ENCODE measurements at regions of chr10 and their contacts with region 1.

Region 1: DNA sequence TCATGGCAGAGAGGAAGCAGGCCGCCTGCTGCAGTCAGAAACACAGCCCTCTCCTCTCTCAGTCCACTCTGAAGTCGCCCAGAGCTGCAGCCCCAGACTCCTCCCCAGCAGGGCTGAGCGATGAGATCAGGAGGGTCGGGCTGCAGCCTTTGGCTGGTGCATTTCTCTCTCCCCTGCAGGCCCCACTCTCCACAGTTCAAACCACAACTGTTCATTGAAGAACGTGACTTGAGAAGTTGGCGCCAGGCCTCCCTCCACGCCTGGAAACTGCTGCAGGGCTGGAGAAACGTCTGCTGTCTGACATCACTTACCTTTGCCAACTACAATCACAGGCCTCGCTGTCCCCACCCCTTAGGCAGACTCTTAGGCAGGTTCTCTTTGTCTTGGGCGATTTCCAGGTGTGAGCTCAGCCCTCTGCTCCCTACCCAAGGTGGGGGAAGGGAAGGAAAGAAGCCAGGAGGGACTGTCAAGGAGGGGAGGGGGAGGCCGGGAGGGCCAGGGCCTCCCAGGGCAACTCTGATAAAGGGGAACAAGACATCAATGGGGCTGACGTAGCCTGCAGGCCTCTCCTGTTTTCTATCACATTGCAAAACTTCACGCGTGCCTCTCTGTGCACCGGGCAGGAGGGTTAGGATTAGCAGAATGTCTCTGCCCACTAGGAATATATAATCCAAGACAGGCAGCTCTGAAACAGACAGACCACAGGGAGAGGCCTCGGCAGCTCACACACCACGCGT is 32.8 kb downstream of the CALML5 start:
- DNase-seq: no peak
- H3K4me3 ChIP-seq: no peak overlapping the region
- H3K27ac ChIP-seq: no peak overlapping the region; a peak in 1 of 4 replicates
- H3K4me1 ChIP-seq: peaks cover 0 to 8% of the 10 kb centered on the region in 2 experiments; a peak in 1 of 4 replicates
- H3K27me3 ChIP-seq: no peaks in the 10 kb centered on the region
- CTCF ChIP-seq: no peak
- EP300 ChIP-seq: no peak
- RAD21 ChIP-seq: no peak

Region 2: GRCh38 chr10:5446390-5446926 is 20.1 kb before region 1 on chr10:
- CTCF ChIA-PET with region 1: interaction called, 14 read pairs
- POLR2A ChIA-PET with region 1: no interaction called
- DNase-seq: no peak
- H3K4me3 ChIP-seq: no peak overlapping the region
- H3K27ac ChIP-seq: 0 out of 4 replicates have a peak overlapping the region, but pooled peaks of 1 of the 2 experiments have one; percentile 22
- H3K4me1 ChIP-seq: peaks cover 2 to 23% of the 10 kb centered on the region in 2 experiments; a peak in 3 of 4 replicates
- H3K27me3 ChIP-seq: no peaks in the 10 kb centered on the region
- CTCF ChIP-seq: no peak
- EP300 ChIP-seq: no peak
- RAD21 ChIP-seq: no peak

Region 3: DNA sequence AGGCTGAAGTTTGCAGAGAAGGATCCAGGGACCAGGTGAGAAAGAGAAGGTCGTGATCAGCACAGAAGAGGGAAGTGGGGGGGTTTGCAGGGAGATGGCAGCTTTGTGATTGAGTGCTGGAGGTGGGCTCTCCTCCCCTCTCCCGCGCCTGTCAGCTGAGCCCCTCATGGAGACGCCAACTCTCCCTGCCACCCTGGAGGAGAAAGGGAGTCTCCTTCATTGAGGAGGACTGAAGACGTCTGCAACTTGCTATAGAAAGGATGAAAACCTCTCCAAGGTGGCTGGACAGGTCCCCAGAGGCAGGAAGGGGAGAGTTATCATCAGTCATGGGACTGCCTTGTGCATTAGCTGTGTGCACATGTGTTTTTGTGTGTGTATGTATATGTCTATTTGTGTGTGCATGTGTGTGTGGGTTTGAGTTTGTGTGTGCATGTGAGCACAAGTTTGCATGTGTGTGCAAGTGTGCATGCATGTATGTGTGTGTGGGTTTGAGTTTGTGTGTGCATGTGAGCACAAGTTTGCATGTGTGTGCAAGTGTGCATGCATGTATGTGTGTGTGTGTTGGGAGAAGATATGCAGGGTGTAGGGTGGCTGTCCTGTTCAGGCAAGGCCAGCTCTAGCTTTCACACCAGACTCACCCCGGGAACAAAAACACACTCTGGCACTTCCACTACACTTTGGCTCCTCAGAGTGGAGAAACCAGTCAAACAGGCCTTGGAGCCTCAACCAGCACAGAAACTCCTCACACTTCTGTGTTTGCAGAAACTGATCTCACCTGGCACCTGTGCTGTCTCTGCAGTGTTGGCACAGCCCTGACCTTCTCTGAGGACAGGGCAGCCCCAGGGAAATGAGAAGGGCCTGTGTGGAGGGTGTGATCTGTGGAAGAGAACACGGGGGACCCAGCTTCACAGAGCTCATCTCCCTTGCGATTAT is 36.6 kb after region 1 on chr10:
- CTCF ChIA-PET with region 1: no interaction called
- POLR2A ChIA-PET with region 1: no interaction called
- DNase-seq: no peak
- H3K4me3 ChIP-seq: no peak overlapping the region
- H3K27ac ChIP-seq: no peak overlapping the region
- H3K4me1 ChIP-seq: no peaks in the 10 kb centered on the region; a peak in 1 of 4 replicates
- H3K27me3 ChIP-seq: peaks cover 8% of the 10 kb centered on the region
- CTCF ChIP-seq: no peak
- EP300 ChIP-seq: no peak
- RAD21 ChIP-seq: no peak

Region 4: GRCh38 chr10:5629303-5630111 is 162.9 kb after region 1 on chr10:
- CTCF ChIA-PET with region 1: interaction called, 34 read pairs
- POLR2A ChIA-PET with region 1: no interaction called
- DNase-seq: peak; percentile 84
- H3K4me3 ChIP-seq: peak overlapping the region in 1 of 2 experiments; percentile 32; a peak in 1 of 4 replicates
- H3K27ac ChIP-seq: no peak overlapping the region
- H3K4me1 ChIP-seq: no peaks in the 10 kb centered on the region; a peak in 1 of 4 replicates
- H3K27me3 ChIP-seq: no peaks in the 10 kb centered on the region
- CTCF ChIP-seq: peak; percentile 81
- EP300 ChIP-seq: no peak
- RAD21 ChIP-seq: peak; percentile 71

Region 5: GRCh38 chr10:5737352-5737751 is 270.8 kb after region 1 on chr10:
- CTCF ChIA-PET with region 1: no interaction called
- POLR2A ChIA-PET with region 1: no interaction called
- DNase-seq: no peak
- H3K4me3 ChIP-seq: no peak overlapping the region
- H3K27ac ChIP-seq: no peak overlapping the region
- H3K4me1 ChIP-seq: no peaks in the 10 kb centered on the region
- H3K27me3 ChIP-seq: no peaks in the 10 kb centered on the region
- CTCF ChIP-seq: no peak; the same call in 1 of the 2 replicates
- EP300 ChIP-seq: no peak
- RAD21 ChIP-seq: no peak

Measured in SK-N-SH (cell line).